Breast epithelium (tissue), 4 donors: ENCODE measurements at regions of chr9 and their contacts with region 1.

Region 1: DNA sequence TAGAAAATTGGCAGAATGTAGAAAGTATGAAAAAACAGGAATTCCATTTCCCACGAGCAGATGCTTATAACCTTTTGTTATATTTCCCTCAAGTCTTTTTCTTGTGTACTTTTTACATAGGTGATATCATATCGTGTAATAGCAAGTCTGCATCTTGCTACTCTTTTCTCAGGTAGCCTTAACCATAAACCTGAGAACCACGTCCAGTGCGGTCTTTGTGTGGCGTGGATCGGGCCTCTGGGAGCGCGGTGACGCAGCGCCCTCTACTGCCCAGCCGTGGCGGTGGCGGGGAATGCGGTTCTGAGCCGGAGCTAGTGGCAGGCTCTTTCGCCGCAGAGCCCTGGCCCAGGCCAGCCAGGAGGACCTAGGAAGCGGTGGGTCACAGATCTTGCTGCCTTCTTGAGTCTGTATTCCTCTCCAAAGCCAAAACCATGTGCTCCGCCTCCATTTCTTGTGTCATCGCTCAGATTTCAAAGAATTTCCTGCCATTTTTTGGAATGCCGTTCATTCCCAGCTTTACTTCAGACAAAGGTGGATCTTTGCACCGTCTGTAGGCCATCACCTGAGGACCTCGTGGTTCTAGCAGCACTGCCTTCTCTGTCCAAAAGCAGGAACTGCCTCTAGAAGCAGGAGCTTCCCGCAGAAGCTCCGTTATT is 71.9 kb downstream of the MVB12B start:
- DNase-seq: peak; percentile 56 to 83
- H3K4me3 ChIP-seq: no peak overlapping the region
- H3K27ac ChIP-seq: peak overlapping the region in 1 of 2 donors; percentile 43
- H3K4me1 ChIP-seq: no peaks in the 10 kb centered on the region
- H3K27me3 ChIP-seq: no peaks in the 10 kb centered on the region
- CTCF ChIP-seq: peak; percentile 72 to 95 (median 95)
- POLR2A ChIP-seq: no peak

Region 2: GRCh38 chr9:126301985-126302603 is 96.4 kb before region 1 on chr9:
- intact Hi-C with region 1: loop called (anchors 10 kb)
- DNase-seq: peak in 1 of 2 donors; percentile 45
- H3K4me3 ChIP-seq: no peak overlapping the region
- H3K27ac ChIP-seq: no peak overlapping the region
- H3K4me1 ChIP-seq: no peaks in the 10 kb centered on the region
- H3K27me3 ChIP-seq: no peaks in the 10 kb centered on the region
- CTCF ChIP-seq: peak; percentile 49 to 77 (median 64)
- POLR2A ChIP-seq: no peak

Region 3: GRCh38 chr9:126456441-126457174 is 58.1 kb after region 1 on chr9:
- intact Hi-C with region 1: no loop called
- DNase-seq: peak in 1 of 2 donors; percentile 5
- H3K4me3 ChIP-seq: no peak overlapping the region
- H3K27ac ChIP-seq: no peak overlapping the region
- H3K4me1 ChIP-seq: no peaks in the 10 kb centered on the region
- H3K27me3 ChIP-seq: no peaks in the 10 kb centered on the region
- CTCF ChIP-seq: no peak
- POLR2A ChIP-seq: no peak

Region 4: DNA sequence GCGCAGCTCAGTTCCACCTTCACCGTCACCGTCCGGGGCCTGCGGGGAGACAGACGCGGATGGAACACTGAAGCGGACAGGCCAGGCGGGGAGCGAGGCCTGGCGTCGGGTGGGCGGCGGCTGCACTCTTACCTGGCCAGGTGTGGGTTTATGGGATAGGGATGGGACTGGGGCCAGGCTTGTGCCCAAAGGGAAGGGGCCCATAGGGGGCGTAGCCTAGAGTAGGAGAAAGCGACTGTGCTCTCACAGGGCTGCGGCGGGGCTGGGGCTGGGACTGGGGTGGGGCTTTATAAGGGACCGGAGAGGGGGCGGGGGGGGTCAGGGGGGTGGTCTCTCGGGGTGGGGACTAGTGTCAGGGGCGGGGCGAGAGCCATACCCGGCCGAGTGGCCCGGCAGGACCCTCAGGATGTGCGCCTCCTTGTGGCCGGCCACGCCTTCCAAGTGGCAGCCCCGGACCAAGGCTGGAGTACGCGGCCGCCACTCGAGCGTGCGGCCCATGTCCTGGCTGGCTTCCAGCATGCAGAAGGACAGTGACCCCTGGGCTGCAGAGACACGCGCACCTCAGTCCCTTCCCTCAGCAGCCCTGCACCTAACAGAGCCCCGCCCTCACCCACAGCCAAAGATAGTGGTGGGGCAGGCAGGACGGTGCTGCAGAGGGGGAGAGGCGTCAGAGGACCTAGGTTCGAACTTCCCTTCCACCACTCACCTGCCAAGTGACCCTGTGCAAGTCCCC is 1427.0 kb after region 1 on chr9:
- intact Hi-C with region 1: no loop called
- DNase-seq: no peak
- H3K4me3 ChIP-seq: peak overlapping the region in 1 of 3 donors; percentile 22
- H3K27ac ChIP-seq: peak overlapping the region; percentile 36 to 67
- H3K4me1 ChIP-seq: no peaks in the 10 kb centered on the region
- H3K27me3 ChIP-seq: no peaks in the 10 kb centered on the region
- CTCF ChIP-seq: no peak
- POLR2A ChIP-seq: no peak